ENCODE measurements at regions of chr1 and their contacts with region 1.

Region 1: GRCh38 chr1:39189592-39190041 is 14.9 kb upstream of the MACF1 start:
- DNase-seq: peak in 1 of 2 experiments; percentile 86
- H3K4me3 ChIP-seq: no peak overlapping the region
- H3K27ac ChIP-seq: peak overlapping the region; percentile 64
- H3K4me1 ChIP-seq: peaks cover 71% of the 10 kb centered on the region
- H3K27me3 ChIP-seq: no peaks in the 10 kb centered on the region
- CTCF ChIP-seq: no peak

Region 2: GRCh38 chr1:39142401-39143151 is 47.0 kb before region 1 on chr1:
- CTCF ChIA-PET with region 1: interaction called, 9 read pairs
- POLR2A ChIA-PET with region 1: no interaction called
- intact Hi-C with region 1: loop called (anchors 1 kb)
- DNase-seq: peak; percentile 91 to 96
- H3K4me3 ChIP-seq: no peak overlapping the region
- H3K27ac ChIP-seq: peak overlapping the region; percentile 43
- H3K4me1 ChIP-seq: peaks cover 26% of the 10 kb centered on the region
- H3K27me3 ChIP-seq: no peaks in the 10 kb centered on the region
- CTCF ChIP-seq: no peak

Region 3: DNA sequence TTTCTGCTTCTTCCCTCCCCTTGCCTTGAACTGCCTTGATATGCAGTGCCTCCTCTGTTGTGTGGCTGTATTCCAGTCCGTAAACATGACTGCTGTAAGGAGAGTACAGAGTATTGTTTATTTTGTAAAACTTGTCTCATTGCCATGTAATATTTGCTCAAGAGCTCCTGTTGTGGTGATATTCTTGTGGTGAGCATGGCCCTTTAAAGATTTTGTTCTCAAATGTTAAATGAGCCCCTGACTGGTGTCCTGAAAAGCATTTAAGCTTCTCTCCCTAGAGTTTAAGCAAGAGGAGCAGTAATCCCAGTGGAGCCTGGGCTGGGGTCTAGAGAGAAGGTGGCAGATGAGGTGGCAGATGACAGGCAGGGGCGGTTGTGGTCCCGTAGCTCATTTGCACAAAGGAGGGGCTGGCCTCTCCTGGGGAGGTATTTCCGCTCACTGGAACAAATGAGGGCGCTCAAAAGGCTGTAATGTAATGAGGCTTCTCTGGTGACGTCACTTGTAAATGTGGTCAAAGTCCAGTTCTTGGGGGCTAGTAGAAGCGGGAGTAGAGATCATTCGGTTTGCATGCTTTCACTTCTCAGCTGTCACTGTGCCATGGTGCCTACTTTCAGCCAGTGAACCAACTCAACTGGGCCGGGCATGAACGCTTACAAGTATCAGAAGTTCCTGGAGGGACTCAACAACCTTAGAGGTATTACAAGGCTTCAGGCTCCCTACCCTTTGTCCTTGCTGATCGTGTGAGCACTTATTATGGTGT is 31.1 kb before region 1 on chr1:
- CTCF ChIA-PET with region 1: interaction called, 13 read pairs
- POLR2A ChIA-PET with region 1: interaction called, 4 read pairs
- intact Hi-C with region 1: loop called (anchors 1 kb)
- DNase-seq: peak; percentile 42 to 58
- H3K4me3 ChIP-seq: no peak overlapping the region
- H3K27ac ChIP-seq: peak overlapping the region; percentile 59
- H3K4me1 ChIP-seq: peaks cover 67% of the 10 kb centered on the region
- H3K27me3 ChIP-seq: no peaks in the 10 kb centered on the region
- CTCF ChIP-seq: no peak

Region 4: DNA sequence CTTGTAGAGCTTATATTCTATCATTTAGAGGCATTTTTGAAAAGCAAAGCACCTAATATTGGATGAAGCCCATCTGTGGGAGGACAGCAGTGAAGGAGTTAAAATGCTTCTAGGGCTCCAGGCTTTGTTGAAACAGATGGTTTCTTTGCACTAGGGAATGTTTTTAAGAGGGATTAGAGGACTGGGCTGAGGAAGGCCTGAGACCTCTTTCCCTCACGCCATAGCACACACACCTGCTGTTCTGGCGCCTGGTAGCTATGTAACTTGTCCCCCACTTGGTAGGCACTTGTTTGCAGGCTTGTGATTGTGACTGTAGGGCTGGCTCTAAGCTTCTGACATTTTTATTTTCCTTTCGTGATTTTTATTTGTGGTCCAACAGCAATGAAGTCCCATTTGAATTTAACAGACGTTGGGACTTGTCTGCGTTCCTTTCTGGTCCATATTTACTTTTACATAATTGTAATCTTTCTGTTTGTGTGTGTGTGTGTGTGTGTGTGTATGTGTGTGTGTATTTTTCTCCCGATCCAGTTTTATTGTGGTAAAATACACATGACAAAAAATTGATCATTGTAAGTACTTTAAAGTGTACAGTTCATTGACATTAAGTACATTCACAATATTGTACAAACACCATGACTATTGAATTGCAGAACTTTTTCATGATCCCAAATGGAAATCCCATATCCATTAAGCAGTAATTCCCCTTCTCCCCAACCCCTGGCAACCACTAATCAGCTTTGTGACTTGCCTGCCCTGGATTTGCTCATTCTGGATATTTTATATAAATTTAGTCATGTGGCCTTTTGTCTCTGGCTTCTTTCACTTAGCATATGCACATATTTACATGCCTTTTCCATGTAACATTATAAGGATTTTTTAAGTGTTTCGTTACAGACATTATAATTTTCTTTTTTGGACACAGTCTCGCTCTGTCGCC is 18.6 kb before region 1 on chr1:
- CTCF ChIA-PET with region 1: interaction called, 10 read pairs
- POLR2A ChIA-PET with region 1: no interaction called
- intact Hi-C with region 1: no loop called
- DNase-seq: no peak
- H3K4me3 ChIP-seq: no peak overlapping the region
- H3K27ac ChIP-seq: no peak overlapping the region
- H3K4me1 ChIP-seq: peaks cover 14% of the 10 kb centered on the region
- H3K27me3 ChIP-seq: no peaks in the 10 kb centered on the region
- CTCF ChIP-seq: no peak

Region 5: GRCh38 chr1:39258146-39258924 is 68.7 kb after region 1 on chr1:
- CTCF ChIA-PET with region 1: interaction called, 49 read pairs
- POLR2A ChIA-PET with region 1: interaction called, 11 read pairs
- intact Hi-C with region 1: loop called (anchors 1 kb)
- DNase-seq: peak; percentile 47 to 78
- H3K4me3 ChIP-seq: no peak overlapping the region
- H3K27ac ChIP-seq: no peak overlapping the region
- H3K4me1 ChIP-seq: 0 out of 2 replicates have a peak, but pooled peaks cover 5% of the 10 kb centered on the region
- H3K27me3 ChIP-seq: no peaks in the 10 kb centered on the region
- CTCF ChIP-seq: peak; percentile 94

Region 6: GRCh38 chr1:39672551-39672947 is 482.9 kb after region 1 on chr1:
- CTCF ChIA-PET with region 1: interaction called, 10 read pairs
- POLR2A ChIA-PET with region 1: no interaction called
- intact Hi-C with region 1: no loop called
- DNase-seq: no peak
- H3K4me3 ChIP-seq: no peak overlapping the region
- H3K27ac ChIP-seq: no peak overlapping the region
- H3K4me1 ChIP-seq: peaks cover 13% of the 10 kb centered on the region
- H3K27me3 ChIP-seq: peaks cover 27% of the 10 kb centered on the region
- CTCF ChIP-seq: peak; percentile 37; the same call in 1 of the 2 replicates